ENCODE measurements at regions of chr4 and their contacts with region 1.

Region 1: GRCh38 chr4:183098723-183099536 is at the start of gene WWC2:
- DNase-seq: peak; percentile 65 to 76 (median 72)
- H3K4me3 ChIP-seq: peak within 1 kb of the TSS; percentile 77 to 84 (median 80)
- H3K4me3 Mint-ChIP-seq: peak within 1 kb of the TSS; percentile 82 to 95
- H3K27ac ChIP-seq: peak within 1 kb of the TSS; percentile 57 to 62
- H3K27ac Mint-ChIP-seq: peak within 1 kb of the TSS in 5 of 7 donors; percentile 3 to 58 (median 46)
- H3K4me1 ChIP-seq: peaks cover 16 to 31% of the 10 kb centered on the region in 2 donors
- H3K4me1 Mint-ChIP-seq: peaks cover 18% of the 10 kb centered on the region
- H3K27me3 ChIP-seq: peaks cover 41 to 67% of the 10 kb centered on the region in 2 donors
- H3K27me3 Mint-ChIP-seq: peaks cover 42 to 70% (median 60%) of the 10 kb centered on the region in 3 donors
- CTCF ChIP-seq: no peak
- polyA plus RNA-seq, gene WWC2: 1.9 to 3.8 (median 2.9) TPM

Region 2: GRCh38 chr4:182904211-182904761 is 194.6 kb before region 1 on chr4:
- intact Hi-C with region 1: no loop called
- DNase-seq: no peak
- H3K4me3 ChIP-seq: no peak overlapping the region
- H3K4me3 Mint-ChIP-seq: no peak overlapping the region
- H3K27ac ChIP-seq: no peak overlapping the region
- H3K27ac Mint-ChIP-seq: peak overlapping the region in 1 of 7 donors; percentile 15
- H3K4me1 ChIP-seq: no peaks in the 10 kb centered on the region
- H3K4me1 Mint-ChIP-seq: no peaks in the 10 kb centered on the region
- H3K27me3 ChIP-seq: no peaks in the 10 kb centered on the region
- H3K27me3 Mint-ChIP-seq: peaks cover 0 to 2% (median 1%) of the 10 kb centered on the region in 3 donors
- CTCF ChIP-seq: no peak

Region 3: GRCh38 chr4:183659029-183659871 is 560.3 kb after region 1 on chr4 and contains the starts of genes RWDD4 and TRAPPC11:
- intact Hi-C with region 1: loop called in 1 of 2 experiments (anchors 10 kb)
- DNase-seq: peak; percentile 96 to 97 (median 97)
- H3K4me3 ChIP-seq: peak within 1 kb of the TSS; percentile 82 to 98 (median 86)
- H3K4me3 Mint-ChIP-seq: peak within 1 kb of the TSS; percentile 96 to 97
- H3K27ac ChIP-seq: peak within 1 kb of the TSS; percentile 85 to 94
- H3K27ac Mint-ChIP-seq: peak within 1 kb of the TSS; percentile 96 to 99 (median 98)
- H3K4me1 ChIP-seq: peaks cover 22 to 33% of the 10 kb centered on the region in 2 donors
- H3K4me1 Mint-ChIP-seq: peaks cover 31% of the 10 kb centered on the region
- H3K27me3 ChIP-seq: no peaks in the 10 kb centered on the region
- H3K27me3 Mint-ChIP-seq: no peaks in the 10 kb centered on the region
- CTCF ChIP-seq: peak; percentile 19
- polyA plus RNA-seq, gene RWDD4: 4.4 to 21.2 (median 16.5) TPM
- polyA plus RNA-seq, gene TRAPPC11: 18.4 to 30.7 (median 29.7) TPM

Region 4: GRCh38 chr4:184228056-184228705 is 1129.3 kb after region 1 on chr4:
- intact Hi-C with region 1: no loop called
- DNase-seq: no peak
- H3K4me3 ChIP-seq: no peak overlapping the region
- H3K4me3 Mint-ChIP-seq: peak overlapping the region in 1 of 2 donors; percentile 22
- H3K27ac ChIP-seq: no peak overlapping the region
- H3K27ac Mint-ChIP-seq: peak overlapping the region in 1 of 7 donors; percentile 3
- H3K4me1 ChIP-seq: peaks cover 23 to 26% of the 10 kb centered on the region in 2 donors
- H3K4me1 Mint-ChIP-seq: peaks cover 25% of the 10 kb centered on the region
- H3K27me3 ChIP-seq: peaks cover 26 to 28% of the 10 kb centered on the region in 2 donors
- H3K27me3 Mint-ChIP-seq: peaks cover 10 to 19% (median 15%) of the 10 kb centered on the region in 3 donors
- CTCF ChIP-seq: no peak